Caki2 (cell line): ENCODE measurements at regions of chr12 and their contacts with region 1.

Region 1: DNA sequence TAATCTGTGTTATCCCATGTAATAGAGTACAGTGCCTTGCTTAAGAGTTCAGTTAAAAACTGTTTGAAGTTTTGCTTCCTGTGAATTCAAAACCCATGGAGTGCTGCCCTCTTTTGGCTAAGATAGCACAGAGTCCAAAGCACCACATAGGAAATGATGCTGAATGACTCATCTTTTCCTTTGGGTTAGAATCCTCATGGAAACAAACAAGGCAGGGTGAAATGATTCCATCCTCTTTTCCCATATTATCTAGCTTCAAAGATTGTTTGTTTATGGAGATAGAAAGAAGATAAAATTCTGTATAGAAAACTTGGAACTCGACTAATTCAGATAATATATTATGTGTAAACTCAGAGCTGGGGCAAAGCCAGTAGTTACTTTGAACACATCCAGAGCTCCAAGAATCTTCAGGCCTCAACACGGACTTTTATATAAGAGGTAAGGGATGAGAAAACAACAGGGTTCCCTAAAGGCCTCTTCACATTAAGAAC is 87.4 kb downstream of the OTOGL start:
- DNase-seq: peak; percentile 88

Region 2: GRCh38 chr12:79407671-79408622 is 778.8 kb before region 1 on chr12:
- in situ Hi-C with region 1: loop called (anchors 25 kb)
- DNase-seq: peak; percentile 81

Region 3: DNA sequence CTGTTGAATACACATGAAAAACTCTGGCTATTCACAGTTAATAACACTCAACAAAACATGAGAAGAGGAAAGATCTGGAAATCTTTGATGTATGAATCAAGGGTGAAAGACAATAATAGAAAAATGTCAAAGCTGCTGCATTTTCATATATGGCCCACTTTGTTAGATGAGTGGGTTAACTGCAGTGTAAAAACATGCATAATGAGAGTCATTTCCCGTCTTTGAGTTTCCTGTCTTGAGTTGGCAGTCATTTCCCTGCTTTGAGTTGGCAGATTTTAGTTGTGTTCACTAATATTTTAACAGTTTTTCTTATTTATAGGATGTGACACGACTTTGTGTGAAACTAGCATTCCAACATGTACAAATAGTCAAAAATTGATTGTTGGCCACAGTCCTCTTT is 169.3 kb after region 1 on chr12:
- in situ Hi-C with region 1: no loop called
- DNase-seq: no peak